GM12878 (cell line): ENCODE measurements at regions of chr1 and their contacts with region 1.

Region 1: GRCh38 chr1:93629099-93630059 is 52.3 kb downstream of the BCAR3 start:
- DNase-seq: peak; percentile 28
- ATAC-seq: peak; percentile 89
- H3K4me3 ChIP-seq: no peak overlapping the region
- H3K27ac ChIP-seq: no peak overlapping the region
- H3K4me1 ChIP-seq: no peaks in the 10 kb centered on the region
- H3K27me3 ChIP-seq: no peaks in the 10 kb centered on the region
- CTCF ChIP-seq: peak; percentile 64 to 89 (median 73)
- EP300 ChIP-seq: no peak
- POLR2A ChIP-seq: no peak
- RAD21 ChIP-seq: peak; percentile 100

Region 2: GRCh38 chr1:93078986-93079654 is 550.3 kb before region 1 on chr1 and contains the start of gene MTF2:
- CTCF ChIA-PET with region 1: interaction called, 4 read pairs
- POLR2A ChIA-PET with region 1: no interaction called
- RAD21 ChIA-PET with region 1: interaction called, 11 read pairs
- SMC1A ChIA-PET with region 1: interaction called, 9 read pairs
- in situ Hi-C with region 1: no loop called
- intact Hi-C with region 1: no loop called
- DNase-seq: peak; percentile 84
- ATAC-seq: peak; percentile 84
- H3K4me3 ChIP-seq: peak within 1 kb of the TSS; percentile 96
- H3K27ac ChIP-seq: peak within 1 kb of the TSS; percentile 93
- H3K4me1 ChIP-seq: no peaks in the 10 kb centered on the region
- H3K27me3 ChIP-seq: no peaks in the 10 kb centered on the region
- CTCF ChIP-seq: 0 out of 6 replicates have a peak, but pooled peaks of 1 of the 3 experiments have one; percentile 1
- EP300 ChIP-seq: peak; percentile 42 to 48; a peak in 3 of 4 replicates
- POLR2A ChIP-seq: peak; percentile 97
- RAD21 ChIP-seq: no peak
- polyA plus RNA-seq, gene MTF2: 22.6 to 30.6 TPM

Region 3: DNA sequence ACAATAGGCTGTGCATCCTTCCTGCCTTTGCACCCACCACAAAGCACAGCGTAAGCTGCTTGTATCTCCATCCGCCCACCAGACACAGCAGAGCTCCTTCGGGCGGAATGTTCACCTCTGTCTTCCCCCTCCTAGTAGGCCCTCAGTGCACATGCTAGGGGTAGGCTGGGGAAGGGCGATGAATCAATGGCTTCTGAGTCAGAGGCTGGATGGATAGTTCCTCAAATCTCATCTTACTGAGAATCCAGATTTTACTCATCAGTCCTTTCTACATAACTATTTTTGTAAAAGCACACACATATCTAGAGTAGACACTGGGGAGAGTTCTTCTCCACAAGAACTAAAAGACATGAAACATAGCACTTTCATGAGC is 21.6 kb before region 1 on chr1:
- CTCF ChIA-PET with region 1: interaction called, 19 read pairs
- POLR2A ChIA-PET with region 1: no interaction called
- RAD21 ChIA-PET with region 1: interaction called, 23 read pairs
- SMC1A ChIA-PET with region 1: interaction called, 14 read pairs
- in situ Hi-C with region 1: no loop called
- intact Hi-C with region 1: no loop called
- DNase-seq: peak; percentile 76
- ATAC-seq: peak; percentile 94
- H3K4me3 ChIP-seq: no peak overlapping the region
- H3K27ac ChIP-seq: peak overlapping the region; percentile 40; the same call in 1 of the 2 replicates
- H3K4me1 ChIP-seq: peaks cover 28% of the 10 kb centered on the region
- H3K27me3 ChIP-seq: no peaks in the 10 kb centered on the region; a peak in 2 of 4 replicates
- CTCF ChIP-seq: no peak
- EP300 ChIP-seq: peak in 1 of 2 experiments; percentile 89; a peak in 2 of 4 replicates
- POLR2A ChIP-seq: no peak
- RAD21 ChIP-seq: no peak

Region 4: GRCh38 chr1:93672069-93672468 is 42.7 kb after region 1 on chr1:
- CTCF ChIA-PET with region 1: interaction called, 13 read pairs
- POLR2A ChIA-PET with region 1: no interaction called
- RAD21 ChIA-PET with region 1: interaction called, 15 read pairs
- SMC1A ChIA-PET with region 1: interaction called, 61 read pairs
- in situ Hi-C with region 1: no loop called
- intact Hi-C with region 1: no loop called
- DNase-seq: no peak
- ATAC-seq: no peak
- H3K4me3 ChIP-seq: no peak overlapping the region
- H3K27ac ChIP-seq: no peak overlapping the region
- H3K4me1 ChIP-seq: no peaks in the 10 kb centered on the region
- H3K27me3 ChIP-seq: no peaks in the 10 kb centered on the region; a peak in 1 of 4 replicates
- CTCF ChIP-seq: no peak
- EP300 ChIP-seq: no peak
- POLR2A ChIP-seq: no peak
- RAD21 ChIP-seq: no peak

Region 5: GRCh38 chr1:93708734-93709481 is 79.5 kb after region 1 on chr1:
- CTCF ChIA-PET with region 1: interaction called, 9 read pairs
- POLR2A ChIA-PET with region 1: interaction called, 3 read pairs
- RAD21 ChIA-PET with region 1: interaction called, 39 read pairs
- SMC1A ChIA-PET with region 1: interaction called, 13 read pairs
- in situ Hi-C with region 1: no loop called
- intact Hi-C with region 1: no loop called
- DNase-seq: no peak
- ATAC-seq: peak; percentile 22
- H3K4me3 ChIP-seq: peak overlapping the region; percentile 23; the same call in 1 of the 2 replicates
- H3K27ac ChIP-seq: peak overlapping the region; percentile 69
- H3K4me1 ChIP-seq: peaks cover 61% of the 10 kb centered on the region
- H3K27me3 ChIP-seq: no peaks in the 10 kb centered on the region
- CTCF ChIP-seq: no peak
- EP300 ChIP-seq: no peak
- POLR2A ChIP-seq: no peak
- RAD21 ChIP-seq: no peak

Region 6: GRCh38 chr1:93758842-93759515 is 129.6 kb after region 1 on chr1:
- CTCF ChIA-PET with region 1: interaction called, 12 read pairs
- POLR2A ChIA-PET with region 1: no interaction called
- RAD21 ChIA-PET with region 1: interaction called, 4 read pairs
- SMC1A ChIA-PET with region 1: interaction called, 3 read pairs
- in situ Hi-C with region 1: no loop called
- intact Hi-C with region 1: no loop called
- DNase-seq: no peak
- ATAC-seq: peak; percentile 91
- H3K4me3 ChIP-seq: no peak overlapping the region
- H3K27ac ChIP-seq: no peak overlapping the region
- H3K4me1 ChIP-seq: no peaks in the 10 kb centered on the region; the same call in 1 of the 2 replicates
- H3K27me3 ChIP-seq: no peaks in the 10 kb centered on the region
- CTCF ChIP-seq: no peak
- EP300 ChIP-seq: no peak
- POLR2A ChIP-seq: no peak
- RAD21 ChIP-seq: no peak

Region 7: DNA sequence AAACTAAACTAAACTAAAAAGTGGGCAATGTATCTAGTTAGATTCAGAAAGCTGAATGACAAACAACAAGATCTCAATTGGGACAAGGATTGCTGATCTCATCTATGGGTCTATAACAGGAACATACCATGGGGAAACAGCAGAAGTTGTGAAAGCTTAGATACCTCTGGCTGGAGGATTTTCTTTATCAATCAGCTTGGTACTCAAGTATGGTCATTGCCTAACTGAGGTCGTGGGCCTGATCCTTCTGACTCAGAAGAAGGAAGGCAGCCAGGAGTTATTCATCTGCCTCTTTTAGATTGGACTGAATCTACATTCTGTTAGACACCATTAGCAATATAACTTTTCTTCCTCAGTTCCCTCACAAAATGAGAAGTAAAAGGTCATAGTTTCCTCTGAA is 209.9 kb after region 1 on chr1:
- CTCF ChIA-PET with region 1: interaction called, 143 read pairs
- POLR2A ChIA-PET with region 1: interaction called, 4 read pairs
- RAD21 ChIA-PET with region 1: interaction called, 114 read pairs
- SMC1A ChIA-PET with region 1: interaction called, 90 read pairs
- in situ Hi-C with region 1: loop called (anchors 5 kb)
- intact Hi-C with region 1: loop called (anchors 1 kb)
- DNase-seq: no peak
- ATAC-seq: no peak
- H3K4me3 ChIP-seq: no peak overlapping the region
- H3K27ac ChIP-seq: no peak overlapping the region
- H3K4me1 ChIP-seq: no peaks in the 10 kb centered on the region
- H3K27me3 ChIP-seq: no peaks in the 10 kb centered on the region
- CTCF ChIP-seq: no peak
- EP300 ChIP-seq: no peak
- POLR2A ChIP-seq: no peak
- RAD21 ChIP-seq: no peak